Activated CD8-positive, alpha-beta T cell treated with anti-CD3 and anti-CD28 coated beads, Interleukin-2, amount 10 ng/mL, durations not matched to agents 7 days and 5 days (primary cell): ENCODE measurements at regions of chr9 and their contacts with region 1.

Region 1: DNA sequence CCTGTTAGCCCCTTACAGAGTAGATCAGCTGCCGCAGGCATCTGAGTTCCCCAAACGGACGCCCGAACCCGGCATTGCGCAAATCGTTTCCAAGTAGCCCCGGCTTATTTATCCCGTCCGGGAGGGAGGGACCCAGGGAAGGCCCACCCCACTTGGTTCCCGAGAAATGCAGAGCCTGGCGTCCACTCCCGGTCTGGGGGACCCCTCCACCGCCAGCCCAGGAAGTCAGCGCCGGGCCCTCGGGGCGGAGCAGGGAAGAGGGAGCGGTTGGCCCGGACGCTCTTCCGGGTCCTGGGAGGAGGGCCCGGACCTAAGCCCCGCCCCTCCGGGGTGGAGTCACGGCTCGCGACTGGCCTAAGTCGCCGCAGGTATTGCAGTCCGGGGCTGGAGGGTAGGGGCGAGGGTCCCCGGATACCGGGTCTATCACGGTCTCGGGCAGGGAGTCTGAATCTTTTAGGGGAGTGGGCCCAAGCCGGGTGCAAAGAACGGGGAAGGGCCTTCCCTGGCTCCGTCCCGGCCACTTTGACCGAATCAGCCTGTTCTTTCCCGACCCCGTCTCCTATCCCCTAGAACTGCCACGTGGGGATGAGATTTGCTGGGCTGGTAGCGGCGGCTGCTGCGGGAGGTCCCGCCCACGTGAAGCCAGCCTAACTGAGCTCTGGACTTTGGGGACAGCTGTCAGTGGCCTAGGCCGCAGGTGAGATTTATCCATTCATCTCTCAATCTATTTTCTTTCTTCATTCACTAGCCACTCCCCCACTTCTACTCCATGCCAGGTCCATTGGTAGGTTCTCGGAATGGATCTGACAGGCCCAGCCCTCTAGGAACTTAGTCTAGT is at the start of gene RABEPK:
- DNase-seq: peak; percentile 91
- ATAC-seq: peak; percentile 98
- H3K4me3 Mint-ChIP-seq: peak within 1 kb of the TSS; percentile 96
- H3K27ac Mint-ChIP-seq: peak within 1 kb of the TSS; percentile 94
- H3K4me1 Mint-ChIP-seq: peaks cover 22% of the 10 kb centered on the region
- H3K27me3 Mint-ChIP-seq: no peaks in the 10 kb centered on the region
- total RNA-seq, gene RABEPK: 15.0 to 15.3 TPM

Region 2: DNA sequence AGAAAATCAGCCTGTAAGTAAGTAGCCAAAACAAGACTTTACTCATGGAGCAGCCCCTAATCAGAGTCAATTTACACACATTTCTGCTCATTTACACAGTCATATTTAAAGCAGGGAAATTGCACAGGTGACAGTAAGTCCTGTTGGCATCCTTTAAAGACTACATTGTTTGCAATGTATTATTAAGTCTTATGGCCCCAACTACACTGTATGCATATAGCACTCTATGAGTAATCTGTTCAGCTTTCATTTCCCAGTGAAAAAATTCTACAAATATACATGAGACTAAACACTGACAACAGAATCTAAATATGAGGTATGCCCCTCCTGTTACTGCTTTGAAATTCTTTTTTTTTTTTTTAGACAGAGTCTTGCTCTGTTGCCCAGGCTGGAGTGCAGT is 30.5 kb before region 1 on chr9:
- CTCF ChIA-PET with region 1: no interaction called
- POLR2A ChIA-PET with region 1: no interaction called
- DNase-seq: no peak
- ATAC-seq: no peak
- H3K4me3 Mint-ChIP-seq: no peak overlapping the region
- H3K27ac Mint-ChIP-seq: no peak overlapping the region
- H3K4me1 Mint-ChIP-seq: peaks cover 11% of the 10 kb centered on the region
- H3K27me3 Mint-ChIP-seq: no peaks in the 10 kb centered on the region

Region 3: GRCh38 chr9:125189361-125190289 is 10.8 kb before region 1 on chr9 and contains the start of gene PPP6C:
- CTCF ChIA-PET with region 1: interaction called, 17 read pairs
- POLR2A ChIA-PET with region 1: interaction called, 25 read pairs
- DNase-seq: peak; percentile 99
- ATAC-seq: peak; percentile 98
- H3K4me3 Mint-ChIP-seq: peak within 1 kb of the TSS; percentile 89
- H3K27ac Mint-ChIP-seq: peak within 1 kb of the TSS; percentile 95
- H3K4me1 Mint-ChIP-seq: peaks cover 49% of the 10 kb centered on the region
- H3K27me3 Mint-ChIP-seq: no peaks in the 10 kb centered on the region
- total RNA-seq, gene PPP6C: 47.2 to 51.9 TPM

Region 4: DNA sequence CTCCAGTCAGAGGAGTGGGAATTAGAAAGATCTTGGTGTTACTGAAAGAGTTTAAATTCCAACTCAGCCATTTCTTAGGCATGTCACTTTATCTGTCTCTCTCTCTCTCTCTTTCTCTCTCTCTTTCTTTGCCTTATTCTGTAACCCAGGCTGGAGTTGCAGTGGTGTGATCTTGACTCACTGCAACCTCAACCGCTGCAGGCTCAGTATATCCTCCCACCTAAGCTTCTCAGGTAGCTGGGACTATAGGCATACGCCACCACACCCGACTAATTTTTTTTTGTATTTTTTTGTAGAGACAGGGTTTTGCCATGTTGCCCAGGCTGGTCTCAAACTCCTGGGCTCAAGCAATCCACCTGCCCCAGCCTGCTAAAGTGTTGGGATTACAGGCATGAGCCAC is 18.2 kb after region 1 on chr9:
- CTCF ChIA-PET with region 1: no interaction called
- POLR2A ChIA-PET with region 1: no interaction called
- DNase-seq: no peak
- ATAC-seq: no peak
- H3K4me3 Mint-ChIP-seq: no peak overlapping the region
- H3K27ac Mint-ChIP-seq: no peak overlapping the region
- H3K4me1 Mint-ChIP-seq: no peaks in the 10 kb centered on the region
- H3K27me3 Mint-ChIP-seq: no peaks in the 10 kb centered on the region

Region 5: GRCh38 chr9:125272697-125273096 is 72.3 kb after region 1 on chr9:
- CTCF ChIA-PET with region 1: no interaction called
- POLR2A ChIA-PET with region 1: no interaction called
- DNase-seq: no peak
- ATAC-seq: no peak
- H3K4me3 Mint-ChIP-seq: no peak overlapping the region
- H3K27ac Mint-ChIP-seq: no peak overlapping the region
- H3K4me1 Mint-ChIP-seq: peaks cover 4% of the 10 kb centered on the region
- H3K27me3 Mint-ChIP-seq: no peaks in the 10 kb centered on the region